ENCODE measurements at regions of chr17 and their contacts with region 1.

Region 1: DNA sequence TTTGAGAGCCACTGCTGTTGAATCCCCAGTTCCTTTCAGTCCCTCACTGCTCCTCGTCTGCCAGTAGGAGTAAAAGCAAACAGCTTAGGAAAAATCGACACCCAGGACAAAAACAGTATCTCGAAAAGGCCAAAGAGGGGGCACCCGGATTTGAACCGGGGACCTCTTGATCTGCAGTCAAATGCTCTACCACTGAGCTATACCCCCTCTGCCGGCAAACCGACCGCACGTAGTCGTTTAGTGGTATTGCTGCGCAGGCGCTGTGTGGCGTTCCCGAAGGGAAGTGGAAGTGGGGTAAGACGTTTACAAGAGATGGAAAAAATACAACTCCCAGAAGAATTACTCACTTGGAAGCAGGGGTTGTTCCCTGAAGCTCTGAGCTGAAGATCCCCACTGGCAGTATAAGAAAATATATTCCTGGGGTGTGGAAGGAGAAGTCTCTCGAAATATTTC is 2.2 kb upstream of the PLXDC1 start:
- DNase-seq: peak; percentile 91 to 93 (median 91)
- H3K4me3 ChIP-seq: peak overlapping the region; percentile 55 to 100 (median 82)
- H3K4me3 Mint-ChIP-seq: peak overlapping the region; percentile 99 to 100
- H3K27ac ChIP-seq: peak overlapping the region; percentile 65 to 75
- H3K27ac Mint-ChIP-seq: peak overlapping the region; percentile 79 to 96 (median 94)
- H3K4me1 ChIP-seq: peaks cover 32 to 44% of the 10 kb centered on the region in 2 donors
- H3K4me1 Mint-ChIP-seq: peaks cover 39% of the 10 kb centered on the region
- H3K27me3 ChIP-seq: peaks cover 23 to 36% of the 10 kb centered on the region in 2 donors
- H3K27me3 Mint-ChIP-seq: peaks cover 39 to 43% (median 41%) of the 10 kb centered on the region in 3 donors
- CTCF ChIP-seq: no peak

Region 2: GRCh38 chr17:38967290-38967738 is 186.3 kb before region 1 on chr17 and contains the start of gene FBXO47:
- intact Hi-C with region 1: loop called in 1 of 2 experiments (anchors 5 kb)
- DNase-seq: peak; percentile 81 to 86 (median 81)
- H3K4me3 ChIP-seq: peak within 1 kb of the TSS; percentile 32 to 66 (median 40)
- H3K4me3 Mint-ChIP-seq: peak within 1 kb of the TSS; percentile 71 to 77
- H3K27ac ChIP-seq: peak within 1 kb of the TSS; percentile 7 to 73
- H3K27ac Mint-ChIP-seq: peak within 1 kb of the TSS; percentile 75 to 92 (median 87)
- H3K4me1 ChIP-seq: peaks cover 9 to 12% of the 10 kb centered on the region in 2 donors
- H3K4me1 Mint-ChIP-seq: peaks cover 9% of the 10 kb centered on the region
- H3K27me3 ChIP-seq: no peaks in the 10 kb centered on the region
- H3K27me3 Mint-ChIP-seq: peaks cover 0 to 6% (median 0%) of the 10 kb centered on the region in 3 donors
- CTCF ChIP-seq: no peak
- polyA plus RNA-seq, gene FBXO47: not detected

Region 3: DNA sequence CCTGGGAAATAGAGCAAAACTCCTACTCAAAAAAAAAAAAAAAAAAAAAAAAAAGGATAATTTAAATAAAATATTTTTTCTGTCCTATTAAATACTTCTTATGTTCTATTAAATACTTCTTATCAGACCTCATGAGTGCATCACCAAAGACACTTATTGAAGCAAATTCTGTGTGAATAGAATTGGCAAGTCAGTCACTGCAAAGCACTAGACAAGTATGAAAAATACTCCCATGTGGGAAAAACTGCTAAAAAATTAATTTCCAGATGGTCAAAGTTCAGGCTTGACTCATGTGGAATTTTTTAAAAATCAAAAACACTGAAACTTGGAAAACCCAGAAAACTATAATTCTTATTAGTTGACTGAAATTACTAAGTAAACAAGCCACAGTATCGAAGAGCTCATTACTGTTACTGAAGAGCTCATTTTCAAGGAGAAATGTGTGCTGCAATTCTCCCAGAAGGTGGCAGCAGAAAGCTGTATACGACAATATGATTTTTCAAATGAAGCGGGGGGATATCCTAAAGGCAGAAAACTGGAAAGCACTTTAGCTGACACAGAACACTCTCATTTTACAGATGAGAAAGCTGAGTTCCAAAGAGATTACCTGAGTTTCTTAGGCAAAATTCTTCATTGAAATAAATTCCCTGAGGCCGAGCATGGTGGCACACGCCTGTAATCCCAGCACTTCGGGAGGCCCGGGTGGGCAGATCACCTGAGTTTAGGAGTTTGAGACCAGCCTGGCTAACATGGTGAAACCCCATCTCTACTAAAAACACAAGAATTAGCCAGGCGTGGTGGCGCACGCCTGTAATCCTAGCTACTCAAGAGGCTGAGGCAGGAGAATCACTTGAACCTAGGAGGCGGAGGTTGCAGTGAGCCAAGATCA is 170.5 kb before region 1 on chr17:
- intact Hi-C with region 1: loop called (anchors 5 kb)
- DNase-seq: peak; percentile 38 to 69 (median 55)
- H3K4me3 ChIP-seq: no peak overlapping the region
- H3K4me3 Mint-ChIP-seq: no peak overlapping the region
- H3K27ac ChIP-seq: no peak overlapping the region
- H3K27ac Mint-ChIP-seq: peak overlapping the region in 1 of 7 donors; percentile 72
- H3K4me1 ChIP-seq: peaks cover 6 to 7% of the 10 kb centered on the region in 2 donors
- H3K4me1 Mint-ChIP-seq: no peaks in the 10 kb centered on the region
- H3K27me3 ChIP-seq: no peaks in the 10 kb centered on the region
- H3K27me3 Mint-ChIP-seq: peaks cover 2 to 21% (median 6%) of the 10 kb centered on the region in 3 donors
- CTCF ChIP-seq: peak; percentile 82

Region 4: DNA sequence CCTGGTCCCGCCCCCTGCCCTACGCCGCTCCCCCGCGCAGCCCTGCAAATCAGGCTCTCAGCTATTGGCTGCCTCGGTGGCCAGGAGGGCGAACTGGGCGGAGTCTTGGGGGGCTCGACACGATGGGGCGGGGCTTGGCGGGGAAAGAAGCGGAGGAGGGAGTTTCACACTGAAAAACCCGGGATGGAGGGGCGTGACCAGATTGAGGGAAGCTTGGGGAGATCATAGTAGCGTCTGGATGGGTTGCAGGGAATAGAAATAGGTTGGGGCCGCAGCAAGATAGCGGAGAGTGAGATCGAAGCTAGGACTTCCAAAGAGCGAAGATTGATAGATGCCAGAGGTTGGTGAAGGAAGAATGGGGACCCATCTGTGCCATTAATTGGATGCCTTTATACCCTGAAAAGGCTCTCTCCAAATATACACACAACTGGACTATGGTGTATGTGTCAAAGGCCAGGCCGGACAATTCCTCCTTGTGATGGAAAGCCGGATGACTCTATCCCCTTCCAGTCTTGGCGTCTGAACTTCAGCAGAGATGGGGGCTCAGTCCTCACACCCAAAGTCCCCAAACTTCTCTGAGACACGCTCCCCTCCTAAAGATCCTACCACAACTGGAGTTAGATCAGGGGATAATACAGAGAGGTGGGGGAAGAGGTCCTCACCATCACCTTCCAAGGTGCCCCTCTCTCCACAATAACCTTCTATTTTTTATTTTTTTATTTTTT is 72.5 kb after region 1 on chr17:
- intact Hi-C with region 1: no loop called
- DNase-seq: no peak
- H3K4me3 ChIP-seq: peak overlapping the region in 1 of 3 experiments; percentile 57
- H3K4me3 Mint-ChIP-seq: peak overlapping the region; percentile 64 to 89
- H3K27ac ChIP-seq: no peak overlapping the region
- H3K27ac Mint-ChIP-seq: no peak overlapping the region
- H3K4me1 ChIP-seq: peaks cover 10 to 18% of the 10 kb centered on the region in 2 donors
- H3K4me1 Mint-ChIP-seq: peaks cover 11% of the 10 kb centered on the region
- H3K27me3 ChIP-seq: peaks cover 21 to 64% of the 10 kb centered on the region in 2 donors
- H3K27me3 Mint-ChIP-seq: peaks cover 57 to 73% (median 62%) of the 10 kb centered on the region in 3 donors
- CTCF ChIP-seq: no peak

Measured in CD14-positive monocyte (primary cell).